Activated naive CD4-positive, alpha-beta T cell treated with anti-CD3 and anti-CD28 coated beads for 36 hours (primary cell): ENCODE measurements at regions of chr16 and their contacts with region 1.

Region 1: GRCh38 chr16:4586291-4586690 is 28.4 kb downstream of the UBALD1 start:
- DNase-seq: no peak
- H3K4me3 Mint-ChIP-seq: no peak overlapping the region
- H3K27ac Mint-ChIP-seq: no peak overlapping the region
- H3K4me1 Mint-ChIP-seq: peaks cover 4% of the 10 kb centered on the region
- H3K27me3 Mint-ChIP-seq: peaks cover 3% of the 10 kb centered on the region

Region 2: GRCh38 chr16:4358831-4359561 is 227.3 kb before region 1 on chr16:
- CTCF ChIA-PET with region 1: interaction called, 5 read pairs
- intact Hi-C with region 1: loop called (anchors 2 kb)
- DNase-seq: peak; percentile 76
- H3K4me3 Mint-ChIP-seq: no peak overlapping the region
- H3K27ac Mint-ChIP-seq: no peak overlapping the region
- H3K4me1 Mint-ChIP-seq: no peaks in the 10 kb centered on the region
- H3K27me3 Mint-ChIP-seq: no peaks in the 10 kb centered on the region